Mammary epithelial cell (primary cell): ENCODE measurements at regions of chr5 and their contacts with region 1.

Region 1: DNA sequence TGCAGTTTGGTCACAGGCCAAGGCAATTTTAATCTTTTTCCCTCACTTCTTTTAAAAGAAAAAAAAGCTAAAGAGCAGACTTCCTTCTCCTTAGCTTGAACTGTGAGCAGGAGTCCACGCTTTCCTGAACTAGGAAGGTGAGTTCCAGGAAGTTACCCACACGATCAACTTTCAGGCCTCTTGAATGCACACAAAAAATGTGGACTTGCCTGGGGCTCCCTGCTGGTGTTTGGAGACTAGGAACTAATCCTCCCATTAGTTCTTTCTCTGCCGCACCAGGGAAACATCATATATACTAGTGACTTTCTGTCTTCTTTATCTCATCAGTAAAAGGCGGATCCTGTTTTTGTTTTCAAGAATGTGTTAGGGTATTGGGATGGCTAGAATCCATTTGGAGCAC is 240.0 kb downstream of the GOLPH3 start:
- DNase-seq: no peak
- H3K4me3 ChIP-seq: no peak overlapping the region
- H3K27ac ChIP-seq: no peak overlapping the region
- H3K4me1 ChIP-seq: peaks cover 5% of the 10 kb centered on the region
- H3K27me3 ChIP-seq: no peaks in the 10 kb centered on the region
- CTCF ChIP-seq: no peak

Region 2: DNA sequence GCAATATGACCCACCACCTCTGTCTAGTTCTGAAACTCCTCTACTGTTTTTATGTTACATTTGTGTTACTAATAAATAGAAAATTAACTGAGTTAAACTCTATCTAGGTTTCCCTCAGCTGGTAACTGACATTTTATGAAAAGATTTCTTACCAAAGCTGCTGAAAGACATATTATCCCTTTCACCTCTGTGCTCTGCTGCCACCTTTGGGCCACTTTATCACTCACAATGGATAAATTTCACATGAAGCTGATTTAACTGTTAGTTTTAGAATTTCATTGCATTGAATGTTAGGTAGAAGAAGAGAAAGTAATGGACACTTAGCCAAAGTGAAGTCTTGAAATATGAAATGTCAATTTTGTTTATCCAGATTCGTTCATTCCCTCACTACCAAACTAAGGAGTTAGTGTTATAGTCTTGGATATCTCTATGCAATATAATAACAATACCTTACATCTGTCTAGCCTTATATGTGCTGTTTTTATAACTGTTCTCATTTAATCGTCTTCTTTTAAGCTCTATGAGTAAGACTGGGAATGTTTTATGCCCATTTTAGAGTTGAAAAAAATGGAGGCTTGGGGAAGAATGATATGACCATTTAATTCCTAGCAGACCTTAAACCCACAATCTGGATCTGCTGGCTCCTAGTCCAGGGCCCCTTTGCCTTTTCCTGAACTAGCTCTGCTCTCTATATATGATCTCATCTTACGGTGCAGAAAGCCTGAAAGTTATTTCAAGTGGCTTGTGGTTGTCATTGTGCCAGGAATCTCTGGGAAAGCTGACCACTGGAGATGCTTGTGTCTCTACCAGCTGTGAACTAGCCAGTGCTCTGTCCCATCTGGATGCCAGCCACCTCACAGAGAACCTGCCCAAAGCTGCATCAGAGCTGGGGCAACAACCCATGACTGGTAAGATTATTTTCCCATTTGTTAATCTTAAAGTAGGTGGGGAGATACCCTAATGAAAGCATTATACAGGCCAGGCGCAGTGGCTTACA is 142.8 kb after region 1 on chr5:
- CTCF ChIA-PET with region 1: interaction called, 6 read pairs
- dilution Hi-C with region 1: no loop called
- in situ Hi-C with region 1: no loop called
- intact Hi-C with region 1: loop called (anchors 1 kb)
- DNase-seq: peak; percentile 39
- H3K4me3 ChIP-seq: no peak overlapping the region
- H3K27ac ChIP-seq: no peak overlapping the region
- H3K4me1 ChIP-seq: peaks cover under 1% of the 10 kb centered on the region
- H3K27me3 ChIP-seq: no peaks in the 10 kb centered on the region
- CTCF ChIP-seq: peak; percentile 73 to 79